Activated CD4-positive, alpha-beta T cell treated with anti-CD3 and anti-CD28 coated beads, Interleukin-2, amount 10 ng/mL, durations not matched to agents 24 days and 14 days (primary cell): ENCODE measurements at regions of chr5 and their contacts with region 1.

Region 1: DNA sequence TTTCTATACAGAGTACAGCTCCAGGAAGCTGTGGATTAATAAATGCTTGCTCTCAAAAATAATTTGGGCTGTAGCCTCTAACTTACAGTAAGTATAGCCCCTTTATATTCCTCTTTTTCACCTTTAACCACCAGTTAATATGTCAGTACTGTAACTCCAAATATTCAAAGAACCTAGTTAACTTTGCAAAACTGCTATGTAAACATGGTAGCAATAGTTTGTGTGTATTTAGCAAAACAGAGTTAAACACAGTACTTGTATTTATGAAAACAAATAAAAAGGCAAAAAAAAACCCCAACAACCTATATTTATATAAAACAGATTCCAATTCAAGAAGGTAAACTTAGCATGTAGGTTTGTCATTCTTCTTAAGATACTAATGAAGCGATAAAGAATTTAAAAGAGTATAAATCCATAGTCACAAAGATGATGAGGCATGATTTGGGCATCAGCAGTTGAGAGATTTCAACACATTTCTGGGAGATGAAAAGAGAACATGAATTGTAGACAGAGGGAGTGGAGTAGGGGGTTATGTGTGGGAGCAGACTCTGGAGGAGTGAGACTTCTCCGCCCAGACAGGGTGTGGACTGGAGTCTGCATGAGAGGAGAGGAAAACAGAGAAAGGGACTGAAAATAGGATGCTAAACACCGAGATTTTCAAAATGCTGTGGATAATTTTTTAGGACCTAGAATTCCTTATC is 47.0 kb upstream of the F2RL1 start:
- DNase-seq: no peak
- H3K4me3 Mint-ChIP-seq: no peak overlapping the region
- H3K27ac Mint-ChIP-seq: no peak overlapping the region
- H3K4me1 Mint-ChIP-seq: peaks cover 5% of the 10 kb centered on the region
- H3K27me3 Mint-ChIP-seq: peaks cover 3% of the 10 kb centered on the region

Region 2: GRCh38 chr5:76601470-76601869 is 170.4 kb before region 1 on chr5:
- intact Hi-C with region 1: loop called (anchors 1 kb)
- DNase-seq: peak; percentile 79
- H3K4me3 Mint-ChIP-seq: no peak overlapping the region
- H3K27ac Mint-ChIP-seq: no peak overlapping the region
- H3K4me1 Mint-ChIP-seq: peaks cover 9% of the 10 kb centered on the region
- H3K27me3 Mint-ChIP-seq: no peaks in the 10 kb centered on the region

Region 3: GRCh38 chr5:76641514-76642120 is 130.2 kb before region 1 on chr5:
- intact Hi-C with region 1: loop called (anchors 10 kb)
- DNase-seq: peak; percentile 90
- H3K4me3 Mint-ChIP-seq: no peak overlapping the region
- H3K27ac Mint-ChIP-seq: no peak overlapping the region
- H3K4me1 Mint-ChIP-seq: peaks cover 14% of the 10 kb centered on the region
- H3K27me3 Mint-ChIP-seq: no peaks in the 10 kb centered on the region

Region 4: DNA sequence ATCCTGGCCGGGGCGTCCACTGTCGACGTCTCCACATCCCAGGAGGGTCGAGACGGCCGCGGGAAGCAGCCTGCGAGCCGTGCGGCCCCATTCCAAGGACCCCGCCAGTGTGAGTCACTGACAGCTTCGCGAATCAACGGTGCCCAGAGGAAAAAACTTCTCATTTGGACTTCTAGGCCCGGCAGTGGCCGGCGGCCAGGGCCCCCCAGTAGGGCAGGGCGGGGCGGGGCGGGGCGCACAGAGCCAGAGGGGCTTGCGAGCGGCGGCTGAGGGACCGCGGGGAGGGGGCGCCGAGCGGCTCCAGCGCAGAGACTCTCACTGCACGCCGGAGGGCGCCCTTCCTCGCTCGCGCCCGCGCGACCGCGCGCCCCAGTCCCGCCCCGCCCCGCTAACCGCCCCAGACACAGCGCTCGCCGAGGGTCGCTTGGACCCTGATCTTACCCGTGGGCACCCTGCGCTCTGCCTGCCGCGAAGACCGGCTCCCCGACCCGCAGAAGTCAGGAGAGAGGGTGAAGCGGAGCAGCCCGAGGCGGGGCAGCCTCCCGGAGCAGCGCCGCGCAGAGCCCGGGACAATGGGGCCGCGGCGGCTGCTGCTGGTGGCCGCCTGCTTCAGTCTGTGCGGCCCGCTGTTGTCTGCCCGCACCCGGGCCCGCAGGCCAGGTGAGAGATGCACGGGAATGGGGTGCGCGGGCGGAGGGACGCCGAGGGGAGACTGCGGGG is 56.0 kb before region 1 on chr5 and contains the start of gene F2R:
- intact Hi-C with region 1: loop called (anchors 1 kb)
- DNase-seq: peak; percentile 86
- H3K4me3 Mint-ChIP-seq: peak within 1 kb of the TSS; percentile 88
- H3K27ac Mint-ChIP-seq: peak within 1 kb of the TSS; percentile 67
- H3K4me1 Mint-ChIP-seq: peaks cover 25% of the 10 kb centered on the region
- H3K27me3 Mint-ChIP-seq: peaks cover 26% of the 10 kb centered on the region
- total RNA-seq, gene F2R: 2.3 and 2.9 TPM in 2 replicates

Region 5: GRCh38 chr5:76736679-76737556 is 34.9 kb before region 1 on chr5:
- intact Hi-C with region 1: loop called (anchors 2 kb)
- DNase-seq: no peak
- H3K4me3 Mint-ChIP-seq: peak overlapping the region; percentile 17
- H3K27ac Mint-ChIP-seq: peak overlapping the region; percentile 46
- H3K4me1 Mint-ChIP-seq: peaks cover 29% of the 10 kb centered on the region
- H3K27me3 Mint-ChIP-seq: no peaks in the 10 kb centered on the region

Region 6: DNA sequence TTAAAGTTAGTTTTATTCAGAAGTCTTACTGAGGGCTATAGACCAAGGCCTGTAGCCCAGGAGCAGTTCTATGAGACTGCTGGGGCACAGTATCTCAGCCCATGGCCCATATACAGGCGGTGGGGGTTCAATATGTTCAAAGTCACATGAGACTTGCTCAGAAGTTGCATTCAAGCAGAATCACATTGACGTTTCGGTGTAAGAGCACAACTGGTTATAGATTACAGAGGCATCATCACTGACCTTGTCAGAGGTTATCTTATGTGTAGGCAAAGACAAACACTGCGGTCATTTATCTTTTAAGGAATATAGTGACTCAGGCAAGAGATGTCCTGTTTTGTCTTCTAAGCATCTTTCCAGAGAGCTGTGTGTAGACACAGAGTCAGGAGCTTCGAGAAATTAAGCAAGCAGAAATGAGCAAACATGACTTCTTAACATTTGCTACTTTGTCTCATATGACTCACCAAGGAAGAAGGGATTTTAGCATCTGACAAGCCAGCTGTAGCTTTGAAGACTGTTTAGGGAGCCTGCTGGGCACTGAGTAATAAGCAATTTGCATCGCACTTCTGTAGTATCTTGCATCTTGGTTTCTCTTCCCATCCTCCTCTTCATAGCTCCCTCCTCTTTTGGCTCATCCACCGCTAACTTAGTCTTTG is 34.1 kb after region 1 on chr5:
- intact Hi-C with region 1: no loop called
- DNase-seq: no peak
- H3K4me3 Mint-ChIP-seq: no peak overlapping the region
- H3K27ac Mint-ChIP-seq: no peak overlapping the region
- H3K4me1 Mint-ChIP-seq: no peaks in the 10 kb centered on the region
- H3K27me3 Mint-ChIP-seq: peaks cover 5% of the 10 kb centered on the region